B cell (primary cell): ENCODE measurements at regions of chr15 and their contacts with region 1.

Region 1: GRCh38 chr15:100349696-100350433 is 8.1 kb upstream of the ADAMTS17 start:
- DNase-seq: peak; percentile 85
- ATAC-seq: peak; percentile 89
- H3K4me3 ChIP-seq: peak overlapping the region; percentile 57 to 96 (median 70)
- H3K4me3 Mint-ChIP-seq: peak overlapping the region; percentile 85
- H3K27ac ChIP-seq: peak overlapping the region; percentile 20 to 28
- H3K27ac Mint-ChIP-seq: peak overlapping the region; percentile 50
- H3K4me1 ChIP-seq: peaks cover 0 to 8% of the 10 kb centered on the region in 2 donors
- H3K4me1 Mint-ChIP-seq: peaks cover 7% of the 10 kb centered on the region
- H3K27me3 ChIP-seq: peaks cover 0 to 32% (median 11%) of the 10 kb centered on the region in 4 experiments
- H3K27me3 Mint-ChIP-seq: peaks cover 24% of the 10 kb centered on the region
- CTCF ChIP-seq: peak; percentile 79

Region 2: DNA sequence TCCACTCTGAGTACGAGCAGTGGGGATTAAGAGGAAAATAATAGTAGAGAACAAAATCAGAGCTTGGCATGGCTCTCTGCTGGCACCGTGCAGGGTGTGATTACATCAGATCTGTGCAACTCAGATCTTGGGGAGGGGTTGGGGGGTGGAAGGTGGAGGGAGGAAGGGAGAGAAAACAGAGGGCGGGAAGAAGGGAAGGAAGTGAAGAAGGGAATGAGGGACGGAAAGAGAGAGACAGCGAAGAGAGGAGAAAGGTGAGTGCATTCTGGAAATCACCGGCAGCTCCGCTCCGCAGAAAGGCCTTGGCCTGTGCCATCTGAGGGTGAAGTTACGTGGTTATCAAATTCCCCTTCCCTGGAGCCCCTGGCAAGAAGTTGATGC is 22.9 kb after region 1 on chr15:
- CTCF ChIA-PET with region 1: no interaction called
- POLR2A ChIA-PET with region 1: no interaction called
- intact Hi-C with region 1: no loop called
- DNase-seq: no peak
- ATAC-seq: no peak
- H3K4me3 ChIP-seq: no peak overlapping the region
- H3K4me3 Mint-ChIP-seq: no peak overlapping the region
- H3K27ac ChIP-seq: no peak overlapping the region
- H3K27ac Mint-ChIP-seq: no peak overlapping the region
- H3K4me1 ChIP-seq: no peaks in the 10 kb centered on the region
- H3K4me1 Mint-ChIP-seq: peaks cover 3% of the 10 kb centered on the region
- H3K27me3 ChIP-seq: peaks cover 0 to 7% (median 5%) of the 10 kb centered on the region in 4 experiments
- H3K27me3 Mint-ChIP-seq: peaks cover 35% of the 10 kb centered on the region
- CTCF ChIP-seq: no peak

Region 3: GRCh38 chr15:100572362-100572983 is 222.6 kb after region 1 on chr15:
- CTCF ChIA-PET with region 1: interaction called, 73 read pairs
- POLR2A ChIA-PET with region 1: no interaction called
- intact Hi-C with region 1: loop called (anchors 1 kb)
- DNase-seq: peak; percentile 39
- ATAC-seq: no peak
- H3K4me3 ChIP-seq: no peak overlapping the region
- H3K4me3 Mint-ChIP-seq: no peak overlapping the region
- H3K27ac ChIP-seq: no peak overlapping the region
- H3K27ac Mint-ChIP-seq: no peak overlapping the region
- H3K4me1 ChIP-seq: no peaks in the 10 kb centered on the region
- H3K4me1 Mint-ChIP-seq: peaks cover 4% of the 10 kb centered on the region
- H3K27me3 ChIP-seq: no peaks in the 10 kb centered on the region
- H3K27me3 Mint-ChIP-seq: no peaks in the 10 kb centered on the region
- CTCF ChIP-seq: peak; percentile 75